Activated naive CD4-positive, alpha-beta T cell treated with anti-CD3 and anti-CD28 coated beads for 36 hours (primary cell): ENCODE measurements at regions of chr3 and their contacts with region 1.

Region 1: GRCh38 chr3:169966428-169966950 is at the start of gene SEC62:
- DNase-seq: peak; percentile 97
- H3K4me3 Mint-ChIP-seq: peak within 1 kb of the TSS; percentile 96
- H3K27ac Mint-ChIP-seq: peak within 1 kb of the TSS; percentile 97
- H3K4me1 Mint-ChIP-seq: peaks cover 63% of the 10 kb centered on the region
- H3K27me3 Mint-ChIP-seq: no peaks in the 10 kb centered on the region
- total RNA-seq, gene SEC62: 60.0 to 73.3 TPM

Region 2: DNA sequence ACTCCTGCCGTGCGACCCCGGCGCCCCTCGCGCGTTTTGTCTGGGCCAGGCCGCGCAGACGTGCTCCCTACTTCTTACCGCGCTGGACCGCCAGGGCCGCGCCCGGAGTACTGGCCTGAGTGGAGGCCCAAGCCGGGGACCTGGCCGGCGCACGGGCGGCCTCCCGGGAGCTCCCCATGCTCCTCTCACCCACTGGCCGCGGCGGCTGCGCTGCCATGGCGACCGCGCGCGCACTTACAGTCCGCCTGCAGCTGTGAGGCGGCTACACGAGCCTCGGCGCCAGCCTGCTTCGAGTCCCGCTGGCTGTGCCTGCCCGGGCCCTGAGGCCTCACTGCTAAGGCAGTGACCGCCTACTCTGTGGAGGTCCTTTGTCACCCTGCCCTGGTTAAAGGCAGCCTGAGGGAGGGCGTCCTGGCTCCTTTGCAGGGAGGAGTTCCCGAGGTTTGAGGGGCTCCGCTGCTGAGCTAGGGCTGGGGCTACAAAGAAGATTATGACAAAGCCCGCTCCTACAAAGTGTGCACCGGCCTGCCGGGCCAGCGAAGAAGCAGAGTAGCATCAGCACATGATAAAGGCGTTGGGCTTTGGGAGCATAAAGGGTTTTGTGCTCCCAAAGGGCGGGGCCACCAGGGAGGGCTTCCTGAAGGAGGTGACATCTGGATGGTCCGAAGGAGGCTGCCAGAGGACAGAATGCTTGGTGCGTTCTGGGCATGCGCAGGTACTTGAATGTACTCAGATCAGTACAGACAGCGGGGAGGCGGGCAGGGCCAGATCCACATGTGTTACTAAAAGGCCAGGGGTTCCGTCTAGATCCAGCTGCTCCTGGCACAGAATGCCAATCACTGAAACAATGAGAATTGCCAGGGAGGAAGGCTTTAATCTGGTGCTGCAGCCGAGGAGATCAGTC is 153.9 kb before region 1 on chr3 and contains the starts of genes LRRC34 and LRRIQ4:
- CTCF ChIA-PET with region 1: interaction called, 4 read pairs
- intact Hi-C with region 1: loop called (anchors 1 kb)
- DNase-seq: peak; percentile 91
- H3K4me3 Mint-ChIP-seq: peak within 1 kb of the TSS; percentile 82
- H3K27ac Mint-ChIP-seq: peak within 1 kb of the TSS; percentile 79
- H3K4me1 Mint-ChIP-seq: peaks cover 19% of the 10 kb centered on the region
- H3K27me3 Mint-ChIP-seq: no peaks in the 10 kb centered on the region
- total RNA-seq, gene LRRC34: 3.8 to 3.9 TPM
- total RNA-seq, gene LRRIQ4: 0.12 TPM in 1 of 2 experiments, not detected in the other

Region 3: GRCh38 chr3:169945313-169945712 is 21.2 kb before region 1 on chr3:
- CTCF ChIA-PET with region 1: interaction called, 7 read pairs
- intact Hi-C with region 1: loop called (anchors 1 kb)
- DNase-seq: peak; percentile 84
- H3K4me3 Mint-ChIP-seq: peak overlapping the region; percentile 30
- H3K27ac Mint-ChIP-seq: peak overlapping the region; percentile 78
- H3K4me1 Mint-ChIP-seq: peaks cover 37% of the 10 kb centered on the region
- H3K27me3 Mint-ChIP-seq: no peaks in the 10 kb centered on the region

Region 4: DNA sequence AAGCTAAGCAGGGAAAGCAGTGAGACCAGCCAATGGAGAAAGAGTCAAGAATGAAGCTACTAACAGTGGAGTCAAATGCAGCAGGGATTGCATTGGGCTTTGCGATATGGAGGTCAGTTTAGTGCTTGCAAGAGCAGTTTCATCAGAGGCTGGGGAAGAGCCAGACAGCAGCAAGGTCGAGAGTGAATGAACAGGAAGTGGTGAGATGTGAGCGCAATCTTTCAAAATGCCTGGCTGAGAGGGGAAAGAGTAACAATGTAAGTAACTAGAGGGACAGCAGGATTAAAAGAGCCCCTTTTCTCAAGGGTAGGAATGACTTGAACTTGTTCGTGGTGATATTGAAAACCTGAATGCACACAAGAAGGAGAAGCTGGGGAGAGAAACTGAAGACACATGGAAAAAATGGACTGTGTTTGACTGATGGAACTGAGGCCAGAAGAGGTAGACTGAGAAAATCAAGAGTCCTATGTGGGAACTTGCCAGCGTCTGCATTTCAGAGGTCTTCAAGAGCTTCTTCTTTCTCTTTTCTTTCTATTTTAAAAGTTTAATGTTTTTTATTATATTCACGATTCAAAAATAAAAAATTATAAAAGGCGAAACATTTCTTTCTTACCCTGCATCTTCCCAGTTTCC is 40.7 kb after region 1 on chr3:
- CTCF ChIA-PET with region 1: interaction called, 5 read pairs
- intact Hi-C with region 1: loop called (anchors 1 kb)
- DNase-seq: peak; percentile 71
- H3K4me3 Mint-ChIP-seq: peak overlapping the region; percentile 56
- H3K27ac Mint-ChIP-seq: peak overlapping the region; percentile 83
- H3K4me1 Mint-ChIP-seq: peaks cover 44% of the 10 kb centered on the region
- H3K27me3 Mint-ChIP-seq: no peaks in the 10 kb centered on the region

Region 5: GRCh38 chr3:170180908-170181879 is 214.7 kb after region 1 on chr3 and contains the start of gene PHC3:
- CTCF ChIA-PET with region 1: no interaction called
- intact Hi-C with region 1: loop called (anchors 2 kb)
- DNase-seq: peak; percentile 93
- H3K4me3 Mint-ChIP-seq: peak within 1 kb of the TSS; percentile 97
- H3K27ac Mint-ChIP-seq: peak within 1 kb of the TSS; percentile 100
- H3K4me1 Mint-ChIP-seq: peaks cover 23% of the 10 kb centered on the region
- H3K27me3 Mint-ChIP-seq: no peaks in the 10 kb centered on the region
- total RNA-seq, gene PHC3: 48.7 to 50.4 TPM

Region 6: GRCh38 chr3:170792471-170792870 is 826.0 kb after region 1 on chr3:
- CTCF ChIA-PET with region 1: no interaction called
- intact Hi-C with region 1: no loop called
- DNase-seq: no peak
- H3K4me3 Mint-ChIP-seq: no peak overlapping the region
- H3K27ac Mint-ChIP-seq: no peak overlapping the region
- H3K4me1 Mint-ChIP-seq: no peaks in the 10 kb centered on the region
- H3K27me3 Mint-ChIP-seq: no peaks in the 10 kb centered on the region